Activated CD4-positive, alpha-beta memory T cell treated with anti-CD3 and anti-CD28 coated beads for 36 hours (primary cell): ENCODE measurements at regions of chr17 and their contacts with region 1.

Region 1: DNA sequence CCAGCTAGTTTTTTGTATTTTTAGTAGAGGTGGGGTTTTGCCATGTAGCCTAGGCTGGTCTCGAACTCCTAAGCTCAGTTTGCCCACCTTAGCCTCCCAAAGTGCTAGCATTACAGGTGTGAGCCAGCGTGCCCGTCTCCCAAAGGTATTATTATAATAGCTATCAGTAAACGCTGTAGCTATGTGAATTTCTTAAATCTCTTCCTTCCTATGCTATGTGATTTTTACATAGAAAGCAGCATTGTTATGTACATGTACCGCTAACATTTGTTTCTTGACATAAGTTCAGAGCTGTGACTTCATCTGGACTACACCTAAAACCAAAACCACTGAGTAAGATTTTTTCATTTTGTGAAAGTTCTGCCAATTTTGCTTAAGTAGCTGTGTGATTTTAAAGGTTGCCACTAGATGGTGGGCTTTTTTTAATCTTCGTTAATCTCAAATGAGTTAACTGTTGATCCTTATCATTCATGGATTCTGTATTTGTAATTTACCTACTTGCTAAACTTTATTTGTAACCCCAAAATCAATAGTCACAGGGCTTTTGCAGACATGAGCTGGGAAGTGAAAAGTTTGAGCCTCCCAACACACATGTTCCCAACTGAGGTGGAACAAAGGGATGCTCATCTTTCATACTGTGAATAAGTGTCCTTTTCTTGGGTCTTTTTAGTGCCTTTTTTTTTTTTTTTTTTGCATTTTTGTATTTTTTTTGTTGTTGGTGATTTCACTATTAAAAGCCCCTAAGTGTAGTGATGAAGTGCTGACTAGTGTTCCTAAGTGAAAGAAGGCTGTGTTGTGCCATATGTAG is 21.9 kb downstream of the PRKAR1A start:
- DNase-seq: no peak
- H3K4me3 Mint-ChIP-seq: no peak overlapping the region
- H3K27ac Mint-ChIP-seq: no peak overlapping the region
- H3K4me1 Mint-ChIP-seq: peaks cover 14% of the 10 kb centered on the region
- H3K27me3 Mint-ChIP-seq: no peaks in the 10 kb centered on the region

Region 2: GRCh38 chr17:68507576-68507975 is 26.5 kb before region 1 on chr17:
- CTCF ChIA-PET with region 1: no interaction called
- POLR2A ChIA-PET with region 1: no interaction called
- intact Hi-C with region 1: no loop called
- DNase-seq: no peak
- H3K4me3 Mint-ChIP-seq: no peak overlapping the region
- H3K27ac Mint-ChIP-seq: no peak overlapping the region
- H3K4me1 Mint-ChIP-seq: peaks cover 20% of the 10 kb centered on the region
- H3K27me3 Mint-ChIP-seq: no peaks in the 10 kb centered on the region

Region 3: GRCh38 chr17:68560966-68561720 is 27.1 kb after region 1 on chr17:
- CTCF ChIA-PET with region 1: no interaction called
- POLR2A ChIA-PET with region 1: no interaction called
- intact Hi-C with region 1: no loop called
- DNase-seq: no peak
- H3K4me3 Mint-ChIP-seq: no peak overlapping the region
- H3K27ac Mint-ChIP-seq: no peak overlapping the region
- H3K4me1 Mint-ChIP-seq: no peaks in the 10 kb centered on the region
- H3K27me3 Mint-ChIP-seq: peaks cover 3% of the 10 kb centered on the region

Region 4: DNA sequence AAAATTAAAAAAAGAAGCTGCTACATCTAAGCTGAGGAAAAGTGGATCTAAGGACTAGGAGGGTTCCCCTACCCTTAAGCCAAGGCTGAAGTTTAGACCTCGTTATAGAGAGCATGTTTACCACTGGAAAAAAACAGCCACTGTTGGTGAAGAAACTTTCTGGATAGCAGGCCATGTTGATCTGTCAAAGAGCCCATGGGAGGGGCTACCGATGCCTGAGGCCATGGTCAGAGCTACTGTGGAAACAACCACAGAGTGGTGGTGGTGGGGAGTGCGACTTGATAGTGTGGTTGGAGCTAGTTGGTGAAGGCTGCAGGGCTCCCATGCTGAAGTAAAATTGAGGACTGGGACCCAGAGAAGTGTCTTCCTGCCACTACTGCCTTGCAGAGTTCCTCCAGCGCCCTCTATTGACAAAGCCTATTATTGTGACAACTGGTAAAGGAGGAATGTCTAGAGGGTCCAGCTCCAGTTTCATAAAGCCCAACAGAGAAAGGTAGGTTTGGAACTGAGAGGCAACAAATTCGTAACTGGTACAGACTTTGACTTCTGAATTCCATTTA is 79.7 kb after region 1 on chr17:
- CTCF ChIA-PET with region 1: interaction called, 8 read pairs
- POLR2A ChIA-PET with region 1: no interaction called
- intact Hi-C with region 1: loop called (anchors 1 kb)
- DNase-seq: peak; percentile 24
- H3K4me3 Mint-ChIP-seq: no peak overlapping the region
- H3K27ac Mint-ChIP-seq: no peak overlapping the region
- H3K4me1 Mint-ChIP-seq: no peaks in the 10 kb centered on the region
- H3K27me3 Mint-ChIP-seq: peaks cover 21% of the 10 kb centered on the region

Region 5: GRCh38 chr17:68759343-68760132 is 225.4 kb after region 1 on chr17:
- CTCF ChIA-PET with region 1: interaction called, 5 read pairs
- POLR2A ChIA-PET with region 1: no interaction called
- intact Hi-C with region 1: loop called (anchors 1 kb)
- DNase-seq: peak; percentile 79
- H3K4me3 Mint-ChIP-seq: peak overlapping the region; percentile 50
- H3K27ac Mint-ChIP-seq: no peak overlapping the region
- H3K4me1 Mint-ChIP-seq: peaks cover 8% of the 10 kb centered on the region
- H3K27me3 Mint-ChIP-seq: peaks cover 2% of the 10 kb centered on the region